CD4-positive, alpha-beta memory T cell (primary cell): ENCODE measurements at regions of chr5 and their contacts with region 1.

Region 1: GRCh38 chr5:141557681-141558136 is 61.1 kb downstream of the DIAPH1 start:
- DNase-seq: peak; percentile 77 to 82 (median 79)
- H3K4me3 ChIP-seq: no peak overlapping the region
- H3K4me3 Mint-ChIP-seq: peak overlapping the region in 4 of 8 donors; percentile 12 to 63 (median 21)
- H3K27ac ChIP-seq: peak overlapping the region; percentile 44
- H3K27ac Mint-ChIP-seq: peak overlapping the region; percentile 76 to 94 (median 93)
- H3K4me1 ChIP-seq: peaks cover 21% of the 10 kb centered on the region
- H3K4me1 Mint-ChIP-seq: peaks cover 26 to 36% (median 34%) of the 10 kb centered on the region in 4 donors
- H3K27me3 ChIP-seq: no peaks in the 10 kb centered on the region
- H3K27me3 Mint-ChIP-seq: no peaks in the 10 kb centered on the region

Region 2: DNA sequence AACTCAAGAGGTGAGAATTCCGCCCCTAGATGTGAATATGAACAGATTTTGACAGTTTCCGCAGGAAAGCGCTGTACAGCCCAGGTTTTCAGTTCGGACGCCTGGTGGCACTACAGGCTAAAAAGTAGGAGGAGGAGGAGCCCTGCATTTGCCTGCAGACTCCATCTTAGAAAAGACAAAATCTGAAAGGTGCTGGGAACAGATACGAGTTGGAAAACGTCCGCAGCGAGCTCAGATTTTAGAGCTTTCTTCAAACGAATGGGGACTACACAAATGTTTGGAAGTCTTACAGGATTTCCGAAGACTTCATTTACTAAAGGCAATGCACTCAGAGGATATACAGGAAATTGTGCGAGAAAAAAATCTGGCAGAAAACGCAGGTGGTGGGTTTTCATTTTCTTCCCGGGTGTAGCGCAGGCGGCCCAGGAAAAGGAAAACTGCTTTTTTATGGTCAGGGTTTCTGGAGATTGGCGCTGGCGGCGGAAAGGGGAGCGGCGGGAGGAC is 473.2 kb before region 1 on chr5:
- CTCF ChIA-PET with region 1: no interaction called
- POLR2A ChIA-PET with region 1: no interaction called
- intact Hi-C with region 1: loop called (anchors 1 kb)
- DNase-seq: peak; percentile 31 to 57 (median 41)
- H3K4me3 ChIP-seq: peak overlapping the region in 1 of 2 donors; percentile 15
- H3K4me3 Mint-ChIP-seq: peak overlapping the region; percentile 82 to 95 (median 90)
- H3K27ac ChIP-seq: no peak overlapping the region
- H3K27ac Mint-ChIP-seq: peak overlapping the region in 4 of 7 donors; percentile 38 to 83 (median 58)
- H3K4me1 ChIP-seq: no peaks in the 10 kb centered on the region
- H3K4me1 Mint-ChIP-seq: peaks cover 2 to 15% (median 6%) of the 10 kb centered on the region in 4 donors
- H3K27me3 ChIP-seq: no peaks in the 10 kb centered on the region
- H3K27me3 Mint-ChIP-seq: peaks cover 7 to 14% of the 10 kb centered on the region in 2 donors

Region 3: GRCh38 chr5:141320225-141321169 is 237.2 kb before region 1 on chr5 and contains the start of gene TAF7:
- CTCF ChIA-PET with region 1: interaction called, 24 read pairs
- POLR2A ChIA-PET with region 1: no interaction called
- intact Hi-C with region 1: no loop called
- DNase-seq: peak; percentile 92 to 93 (median 93)
- H3K4me3 ChIP-seq: peak within 1 kb of the TSS; percentile 54 to 77
- H3K4me3 Mint-ChIP-seq: peak within 1 kb of the TSS; percentile 90 to 99 (median 98)
- H3K27ac ChIP-seq: peak within 1 kb of the TSS; percentile 97
- H3K27ac Mint-ChIP-seq: peak within 1 kb of the TSS; percentile 93 to 100 (median 97)
- H3K4me1 ChIP-seq: peaks cover 15% of the 10 kb centered on the region
- H3K4me1 Mint-ChIP-seq: peaks cover 20 to 32% (median 26%) of the 10 kb centered on the region in 4 donors
- H3K27me3 ChIP-seq: no peaks in the 10 kb centered on the region
- H3K27me3 Mint-ChIP-seq: peaks cover 0 to 2% of the 10 kb centered on the region in 2 donors
- total RNA-seq, gene TAF7: 109 to 119 TPM

Region 4: GRCh38 chr5:141349917-141350619 is 207.6 kb before region 1 on chr5 and contains the start of gene PCDHGB1:
- CTCF ChIA-PET with region 1: no interaction called
- POLR2A ChIA-PET with region 1: no interaction called
- intact Hi-C with region 1: loop called (anchors 10 kb)
- DNase-seq: peak in 2 of 5 donors; percentile 15 to 32
- H3K4me3 ChIP-seq: no peak within 1 kb of the TSS
- H3K4me3 Mint-ChIP-seq: peak within 1 kb of the TSS; percentile 19 to 81 (median 67)
- H3K27ac ChIP-seq: no peak within 1 kb of the TSS
- H3K27ac Mint-ChIP-seq: peak within 1 kb of the TSS in 1 of 7 donors; percentile 37
- H3K4me1 ChIP-seq: no peaks in the 10 kb centered on the region
- H3K4me1 Mint-ChIP-seq: peaks cover 0 to 4% (median 2%) of the 10 kb centered on the region in 4 donors
- H3K27me3 ChIP-seq: no peaks in the 10 kb centered on the region
- H3K27me3 Mint-ChIP-seq: peaks cover 31 to 37% of the 10 kb centered on the region in 2 donors
- total RNA-seq, gene PCDHGB1: 0.17 to 0.26 TPM

Region 5: GRCh38 chr5:141412854-141413539 is 144.7 kb before region 1 on chr5 and contains the start of gene PCDHGA10:
- CTCF ChIA-PET with region 1: interaction called, 23 read pairs
- POLR2A ChIA-PET with region 1: no interaction called
- intact Hi-C with region 1: no loop called
- DNase-seq: peak; percentile 53 to 61 (median 59)
- H3K4me3 ChIP-seq: peak within 1 kb of the TSS; percentile 14 to 51
- H3K4me3 Mint-ChIP-seq: peak within 1 kb of the TSS; percentile 81 to 92 (median 89)
- H3K27ac ChIP-seq: no peak within 1 kb of the TSS
- H3K27ac Mint-ChIP-seq: peak within 1 kb of the TSS in 5 of 7 donors; percentile 30 to 87 (median 69)
- H3K4me1 ChIP-seq: peaks cover 8% of the 10 kb centered on the region
- H3K4me1 Mint-ChIP-seq: peaks cover 11 to 20% (median 15%) of the 10 kb centered on the region in 4 donors
- H3K27me3 ChIP-seq: peaks cover 22% of the 10 kb centered on the region
- H3K27me3 Mint-ChIP-seq: peaks cover 36 to 56% of the 10 kb centered on the region in 2 donors
- total RNA-seq, gene PCDHGA10: 0.25 to 0.35 TPM

Region 6: GRCh38 chr5:141547488-141547887 is 10.2 kb before region 1 on chr5:
- CTCF ChIA-PET with region 1: interaction called, 34 read pairs
- POLR2A ChIA-PET with region 1: interaction called, 4 read pairs
- intact Hi-C with region 1: no loop called
- DNase-seq: no peak
- H3K4me3 ChIP-seq: no peak overlapping the region
- H3K4me3 Mint-ChIP-seq: peak overlapping the region in 1 of 8 donors; percentile 64
- H3K27ac ChIP-seq: no peak overlapping the region
- H3K27ac Mint-ChIP-seq: no peak overlapping the region
- H3K4me1 ChIP-seq: peaks cover 17% of the 10 kb centered on the region
- H3K4me1 Mint-ChIP-seq: peaks cover 27 to 51% (median 38%) of the 10 kb centered on the region in 4 donors
- H3K27me3 ChIP-seq: no peaks in the 10 kb centered on the region
- H3K27me3 Mint-ChIP-seq: no peaks in the 10 kb centered on the region